ENCODE measurements at regions of chr11 and their contacts with region 1.

Region 1: DNA sequence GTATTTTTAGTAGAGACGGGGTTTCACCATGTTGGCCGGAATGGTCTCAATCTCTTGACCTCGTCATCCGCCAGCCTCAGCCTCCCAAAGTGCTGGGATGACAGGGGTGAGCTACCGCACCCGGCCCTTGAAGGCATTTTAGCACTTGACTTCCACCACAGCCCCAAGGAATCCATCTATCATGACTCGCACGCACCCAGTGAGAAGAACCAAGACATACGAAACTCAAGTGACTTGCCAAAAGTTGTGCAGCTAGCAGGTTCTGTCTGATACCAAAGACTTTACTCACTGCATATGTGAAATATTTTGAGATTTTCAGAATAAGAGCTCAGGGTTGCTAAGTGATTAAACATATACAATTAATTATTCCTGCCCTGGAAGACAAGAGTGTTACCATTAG is 21.0 kb downstream of the FLI1 start:
- DNase-seq: no peak
- H3K4me3 ChIP-seq: no peak overlapping the region
- H3K27ac ChIP-seq: no peak overlapping the region
- H3K4me1 ChIP-seq: peaks cover 71% of the 10 kb centered on the region
- CTCF ChIP-seq: no peak

Region 2: DNA sequence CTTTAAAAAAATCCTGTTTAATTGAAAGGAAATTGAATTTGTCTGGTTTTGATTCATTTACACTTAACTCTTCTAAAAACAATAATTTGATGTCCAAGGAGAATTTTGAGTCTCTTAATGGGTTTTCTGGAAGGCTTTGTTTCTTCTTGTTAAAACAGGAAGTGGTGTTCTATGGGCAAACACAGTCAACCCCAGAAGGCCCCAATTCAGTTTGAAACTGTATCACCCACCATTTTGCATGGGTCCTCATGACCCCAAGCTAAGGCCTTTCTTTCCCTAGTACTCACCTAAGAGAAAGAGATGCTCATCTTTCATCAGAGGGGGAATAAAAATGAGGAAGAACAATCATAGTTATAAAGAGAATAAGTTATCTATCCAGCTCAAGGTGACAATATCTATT is 10.4 kb before region 1 on chr11:
- CTCF ChIA-PET with region 1: no interaction called
- POLR2A ChIA-PET with region 1: interaction called, 10 read pairs
- intact Hi-C with region 1: no loop called
- DNase-seq: no peak
- H3K4me3 ChIP-seq: no peak overlapping the region
- H3K27ac ChIP-seq: no peak overlapping the region
- H3K4me1 ChIP-seq: peaks cover 34% of the 10 kb centered on the region
- CTCF ChIP-seq: no peak

Region 3: DNA sequence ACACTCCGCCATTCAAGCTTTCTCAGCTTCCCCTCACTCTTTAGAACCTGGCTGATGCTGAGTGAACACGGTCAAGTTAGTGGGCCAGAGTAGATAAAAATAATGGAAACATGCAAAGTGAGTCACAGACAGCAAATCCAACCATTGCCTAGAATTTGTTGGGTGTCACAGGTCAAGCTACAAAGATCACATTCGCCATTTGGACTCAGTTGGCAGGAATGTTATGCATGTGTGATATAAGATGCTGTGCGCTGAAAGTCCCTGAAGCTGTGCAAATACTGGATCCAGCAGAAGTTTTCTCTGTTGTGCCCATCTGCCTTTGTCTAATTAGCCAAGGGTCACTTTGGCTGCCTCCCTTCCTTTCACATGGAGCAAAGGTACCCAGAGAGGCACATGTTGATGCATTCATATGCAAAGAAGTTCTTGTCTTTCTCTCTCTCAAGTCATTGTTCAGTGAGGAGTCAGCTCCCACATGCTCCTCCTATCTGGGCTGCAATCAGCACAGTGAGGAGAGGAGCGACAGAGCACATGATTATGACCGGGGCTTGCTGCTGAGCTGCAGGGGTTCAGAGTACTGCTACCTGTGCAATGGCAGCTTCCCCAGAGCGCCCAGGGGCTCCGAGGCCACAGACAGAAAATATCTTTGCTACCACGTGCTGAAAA is 18.7 kb after region 1 on chr11:
- CTCF ChIA-PET with region 1: interaction called, 21 read pairs
- POLR2A ChIA-PET with region 1: interaction called, 173 read pairs
- intact Hi-C with region 1: loop called (anchors 1 kb)
- DNase-seq: peak; percentile 83
- H3K4me3 ChIP-seq: peak overlapping the region; percentile 50
- H3K27ac ChIP-seq: peak overlapping the region; percentile 99
- H3K4me1 ChIP-seq: peaks cover 100% of the 10 kb centered on the region
- CTCF ChIP-seq: no peak

Measured in OCI-LY7 (cell line).